Endothelial cell of umbilical vein (primary cell): ENCODE measurements at regions of chr21 and their contacts with region 1.

Region 1: GRCh38 chr21:37711836-37712568 is 204.3 kb downstream of the KCNJ6 start:
- DNase-seq: peak; percentile 67
- H3K4me3 ChIP-seq: no peak overlapping the region
- H3K27ac ChIP-seq: no peak overlapping the region
- H3K4me1 ChIP-seq: no peaks in the 10 kb centered on the region
- H3K27me3 ChIP-seq: no peaks in the 10 kb centered on the region
- CTCF ChIP-seq: peak; percentile 82 to 95
- POLR2A ChIP-seq: no peak

Region 2: DNA sequence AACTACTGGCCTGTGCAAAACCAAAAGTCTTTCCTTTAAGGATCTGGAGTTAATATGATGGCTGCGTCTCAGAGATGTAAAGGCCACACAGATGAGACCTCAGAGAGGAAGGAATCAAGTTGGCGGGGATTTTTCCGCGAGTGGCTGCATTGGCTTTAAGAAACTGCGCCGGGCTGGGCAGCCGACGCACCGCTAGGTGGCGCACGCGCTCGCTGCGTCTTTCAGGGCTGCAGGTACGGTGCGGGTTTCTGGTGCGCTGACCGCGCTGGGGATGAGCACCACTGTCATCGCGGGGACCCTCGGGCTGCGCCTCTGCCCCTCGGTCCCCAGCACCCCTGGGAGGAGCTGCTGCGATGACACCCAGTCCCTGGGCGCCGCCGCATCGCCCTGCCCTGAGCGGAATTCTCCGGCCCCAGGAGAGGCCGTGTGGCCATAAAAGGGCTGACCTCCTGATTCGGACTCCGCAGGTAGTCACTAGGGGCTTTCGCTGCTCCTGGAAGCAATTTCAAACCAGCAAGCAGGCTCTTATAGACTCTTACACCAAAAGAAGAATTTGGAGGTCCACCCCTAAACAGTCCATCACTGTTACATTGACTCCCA is 36.7 kb before region 1 on chr21:
- CTCF ChIA-PET with region 1: interaction called, 12 read pairs
- POLR2A ChIA-PET with region 1: no interaction called
- dilution Hi-C with region 1: no loop called
- intact Hi-C with region 1: no loop called
- DNase-seq: peak; percentile 48
- H3K4me3 ChIP-seq: no peak overlapping the region
- H3K27ac ChIP-seq: no peak overlapping the region
- H3K4me1 ChIP-seq: peaks cover 3% of the 10 kb centered on the region
- H3K27me3 ChIP-seq: peaks cover 4 to 13% of the 10 kb centered on the region in 2 experiments
- CTCF ChIP-seq: peak; percentile 95 to 96
- POLR2A ChIP-seq: no peak

Region 3: DNA sequence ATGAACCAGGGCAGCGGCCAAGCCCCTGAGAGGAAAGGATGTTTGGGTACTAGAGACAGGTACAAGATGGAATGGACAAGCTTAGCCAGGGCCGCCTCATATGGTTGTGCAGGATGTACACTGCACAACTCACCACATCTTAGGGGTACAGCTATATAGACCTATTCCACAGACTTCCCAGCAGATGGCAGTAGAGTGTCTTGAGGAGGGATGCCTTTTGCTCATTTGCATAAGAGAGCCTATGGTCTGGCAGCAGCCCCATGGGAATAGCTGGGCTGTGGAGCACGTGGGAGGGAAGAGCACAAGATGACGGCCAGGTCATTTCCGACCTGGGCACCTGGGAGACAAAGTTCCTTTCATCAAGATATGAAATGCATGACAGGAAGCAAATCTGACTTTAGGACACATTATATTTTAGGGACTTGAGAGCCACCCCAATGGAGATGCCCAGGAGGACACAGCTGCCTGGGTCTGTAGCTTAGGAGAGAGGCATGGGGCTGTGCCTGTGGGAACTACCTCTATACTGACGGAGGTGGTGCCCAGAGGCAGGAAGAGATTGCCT is 11.3 kb before region 1 on chr21:
- CTCF ChIA-PET with region 1: interaction called, 28 read pairs
- POLR2A ChIA-PET with region 1: no interaction called
- dilution Hi-C with region 1: no loop called
- intact Hi-C with region 1: no loop called
- DNase-seq: peak; percentile 56
- H3K4me3 ChIP-seq: no peak overlapping the region
- H3K27ac ChIP-seq: no peak overlapping the region
- H3K4me1 ChIP-seq: no peaks in the 10 kb centered on the region
- H3K27me3 ChIP-seq: peaks cover 10 to 12% of the 10 kb centered on the region in 2 experiments
- CTCF ChIP-seq: peak; percentile 58 to 74
- POLR2A ChIP-seq: no peak

Region 4: DNA sequence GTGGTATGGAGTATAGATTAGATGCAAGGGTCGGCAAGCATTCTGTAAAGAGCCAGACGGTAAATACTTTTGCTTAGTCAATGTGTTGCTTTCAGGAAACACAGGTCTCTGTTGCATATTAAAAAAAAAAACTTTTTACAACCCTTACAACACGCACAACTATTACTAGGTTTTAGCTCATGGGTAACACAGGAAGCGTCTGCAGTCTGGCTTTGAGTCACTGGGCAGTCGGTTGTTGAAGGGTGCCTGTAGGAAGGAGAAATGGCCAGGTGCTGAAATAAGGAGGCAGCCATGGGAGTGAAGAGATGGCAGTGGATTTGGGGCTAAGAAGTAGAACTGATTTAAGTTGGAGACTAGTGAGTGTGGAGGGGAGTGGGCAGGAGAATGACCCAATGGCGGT is 12.2 kb after region 1 on chr21:
- CTCF ChIA-PET with region 1: interaction called, 11 read pairs
- POLR2A ChIA-PET with region 1: no interaction called
- dilution Hi-C with region 1: no loop called
- intact Hi-C with region 1: no loop called
- DNase-seq: no peak
- H3K4me3 ChIP-seq: no peak overlapping the region
- H3K27ac ChIP-seq: no peak overlapping the region
- H3K4me1 ChIP-seq: no peaks in the 10 kb centered on the region
- H3K27me3 ChIP-seq: peaks cover 2 to 7% of the 10 kb centered on the region in 2 experiments
- CTCF ChIP-seq: no peak
- POLR2A ChIP-seq: no peak

Region 5: GRCh38 chr21:37916310-37917051 is 204.5 kb after region 1 on chr21 and contains the start of gene KCNJ6:
- CTCF ChIA-PET with region 1: interaction called, 15 read pairs
- POLR2A ChIA-PET with region 1: no interaction called
- dilution Hi-C with region 1: no loop called
- intact Hi-C with region 1: loop called (anchors 1 kb)
- DNase-seq: peak; percentile 47
- H3K4me3 ChIP-seq: peak within 1 kb of the TSS in 1 of 3 experiments; percentile 20
- H3K27ac ChIP-seq: no peak within 1 kb of the TSS
- H3K4me1 ChIP-seq: no peaks in the 10 kb centered on the region
- H3K27me3 ChIP-seq: peaks cover 34 to 47% of the 10 kb centered on the region in 2 experiments
- CTCF ChIP-seq: peak; percentile 51 to 77
- POLR2A ChIP-seq: no peak
- total RNA-seq, gene KCNJ6: not detected in 2 replicates

Region 6: DNA sequence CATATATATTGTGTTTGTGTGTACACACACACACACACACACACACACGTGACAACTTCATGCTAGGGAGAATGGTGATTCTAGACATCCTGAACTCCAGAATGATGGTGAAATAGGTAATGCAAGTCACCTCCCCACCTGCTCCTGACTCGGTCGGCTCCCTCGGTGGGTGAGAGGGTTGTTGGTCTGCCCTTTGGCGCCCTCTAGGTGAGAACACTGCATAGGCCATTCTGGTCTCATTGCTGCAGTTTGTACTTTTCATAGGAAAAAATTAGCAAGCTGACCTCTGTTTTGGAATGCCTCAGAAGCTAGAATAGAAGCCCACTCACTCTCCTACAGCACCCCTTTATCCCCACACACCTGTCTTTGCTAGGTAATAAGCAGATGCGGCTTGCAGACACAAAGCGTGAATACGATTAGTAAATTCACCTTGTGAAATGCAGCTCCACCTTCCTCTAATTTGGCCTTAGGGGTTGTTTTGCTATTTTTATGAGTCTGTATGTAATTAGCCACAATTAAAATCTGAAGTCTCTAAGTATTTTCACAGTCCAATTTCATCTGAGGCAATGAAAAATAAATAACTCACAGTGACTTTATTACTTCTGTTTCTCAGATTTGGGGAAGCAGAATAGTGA is 414.8 kb after region 1 on chr21:
- CTCF ChIA-PET with region 1: interaction called, 78 read pairs
- POLR2A ChIA-PET with region 1: no interaction called
- dilution Hi-C with region 1: no loop called
- intact Hi-C with region 1: loop called (anchors 1 kb)
- DNase-seq: peak; percentile 51
- H3K4me3 ChIP-seq: no peak overlapping the region
- H3K27ac ChIP-seq: no peak overlapping the region
- H3K4me1 ChIP-seq: no peaks in the 10 kb centered on the region
- H3K27me3 ChIP-seq: peaks cover 0 to 7% of the 10 kb centered on the region in 2 experiments
- CTCF ChIP-seq: peak; percentile 74 to 91
- POLR2A ChIP-seq: no peak

Region 7: GRCh38 chr21:38159355-38159754 is 447.4 kb after region 1 on chr21:
- CTCF ChIA-PET with region 1: interaction called, 12 read pairs
- POLR2A ChIA-PET with region 1: no interaction called
- dilution Hi-C with region 1: no loop called
- intact Hi-C with region 1: no loop called
- DNase-seq: peak; percentile 81
- H3K4me3 ChIP-seq: no peak overlapping the region
- H3K27ac ChIP-seq: no peak overlapping the region
- H3K4me1 ChIP-seq: no peaks in the 10 kb centered on the region
- H3K27me3 ChIP-seq: peaks cover 20 to 29% of the 10 kb centered on the region in 2 experiments
- CTCF ChIP-seq: peak; percentile 84 to 93
- POLR2A ChIP-seq: no peak

Region 8: GRCh38 chr21:38333301-38334272 is 621.6 kb after region 1 on chr21:
- CTCF ChIA-PET with region 1: no interaction called
- POLR2A ChIA-PET with region 1: no interaction called
- dilution Hi-C with region 1: no loop called
- intact Hi-C with region 1: no loop called
- DNase-seq: no peak
- H3K4me3 ChIP-seq: no peak overlapping the region
- H3K27ac ChIP-seq: no peak overlapping the region
- H3K4me1 ChIP-seq: no peaks in the 10 kb centered on the region
- H3K27me3 ChIP-seq: no peaks in the 10 kb centered on the region
- CTCF ChIP-seq: peak; percentile 10 to 17
- POLR2A ChIP-seq: no peak